CD14-positive monocyte (primary cell): ENCODE measurements at regions of chr2 and their contacts with region 1.

Region 1: DNA sequence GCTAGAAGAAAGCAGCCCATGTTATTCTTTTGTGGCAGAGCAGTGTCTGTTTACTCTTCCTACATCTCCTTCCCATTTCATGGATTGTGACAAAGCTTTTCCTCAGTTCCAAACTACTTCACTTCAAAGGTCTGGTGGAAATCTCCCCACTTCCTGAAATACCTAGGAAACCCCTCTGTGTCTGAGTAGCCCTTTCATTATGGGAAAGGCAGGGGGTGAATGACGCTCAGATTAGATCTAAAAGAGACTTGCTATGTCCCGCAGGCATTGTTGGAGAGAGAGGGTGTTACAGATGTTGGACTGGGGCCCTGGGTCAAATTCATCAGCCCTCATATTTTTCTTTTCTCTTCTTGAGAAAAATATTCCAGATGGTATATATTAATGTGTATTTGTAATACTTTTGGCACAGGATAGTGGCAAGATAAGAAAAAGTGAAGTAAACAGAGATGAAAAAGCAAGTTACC is 675.0 kb downstream of the IRS1 start:
- DNase-seq: no peak
- H3K4me3 ChIP-seq: no peak overlapping the region
- H3K4me3 Mint-ChIP-seq: no peak overlapping the region
- H3K27ac ChIP-seq: peak overlapping the region in 1 of 2 donors; percentile 44
- H3K27ac Mint-ChIP-seq: peak overlapping the region in 6 of 7 donors; percentile 61 to 84 (median 70)
- H3K4me1 ChIP-seq: peaks cover 50 to 71% of the 10 kb centered on the region in 2 donors
- H3K4me1 Mint-ChIP-seq: peaks cover 56% of the 10 kb centered on the region
- H3K27me3 ChIP-seq: no peaks in the 10 kb centered on the region
- H3K27me3 Mint-ChIP-seq: no peaks in the 10 kb centered on the region
- CTCF ChIP-seq: no peak

Region 2: DNA sequence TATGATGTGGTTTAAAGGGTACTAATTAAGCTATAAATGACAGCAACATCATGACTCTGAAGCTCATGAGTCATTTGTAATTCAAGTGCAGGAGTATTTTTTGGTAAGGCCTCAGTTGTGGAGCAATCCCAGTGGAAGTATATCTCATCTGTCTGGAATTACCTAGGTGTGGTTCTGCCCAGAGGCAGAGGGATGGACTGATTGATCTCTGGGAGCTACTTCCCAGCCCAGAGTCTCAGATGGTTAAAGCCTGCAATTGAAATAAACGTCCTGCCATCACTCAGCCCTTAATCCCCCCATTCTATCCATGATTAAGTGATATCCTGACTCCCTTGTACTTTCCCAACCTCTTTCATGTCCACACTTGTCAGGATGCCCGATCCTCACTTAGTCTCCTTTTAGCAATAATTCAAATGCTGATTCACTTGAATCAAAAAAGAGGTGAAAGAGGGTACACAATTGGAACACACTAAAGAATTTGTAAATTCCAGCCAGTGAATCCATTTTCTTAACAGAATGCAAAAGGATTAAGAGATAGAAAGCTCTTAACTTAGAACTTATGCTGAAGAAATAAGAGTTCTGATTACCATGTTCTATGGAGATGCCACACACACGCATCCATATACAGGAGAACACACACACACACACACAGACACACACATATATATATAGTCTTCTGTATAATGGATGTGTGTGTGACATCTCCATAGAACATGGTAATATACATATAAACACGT is 60.7 kb before region 1 on chr2:
- intact Hi-C with region 1: no loop called
- DNase-seq: no peak
- H3K4me3 ChIP-seq: no peak overlapping the region
- H3K4me3 Mint-ChIP-seq: no peak overlapping the region
- H3K27ac ChIP-seq: no peak overlapping the region
- H3K27ac Mint-ChIP-seq: no peak overlapping the region
- H3K4me1 ChIP-seq: peaks cover 14 to 22% of the 10 kb centered on the region in 2 donors
- H3K4me1 Mint-ChIP-seq: peaks cover 23% of the 10 kb centered on the region
- H3K27me3 ChIP-seq: no peaks in the 10 kb centered on the region
- H3K27me3 Mint-ChIP-seq: peaks cover 0 to 1% (median 0%) of the 10 kb centered on the region in 3 donors
- CTCF ChIP-seq: no peak

Region 3: GRCh38 chr2:226079671-226080181 is 44.9 kb before region 1 on chr2:
- intact Hi-C with region 1: no loop called
- DNase-seq: no peak
- H3K4me3 ChIP-seq: no peak overlapping the region
- H3K4me3 Mint-ChIP-seq: no peak overlapping the region
- H3K27ac ChIP-seq: no peak overlapping the region
- H3K27ac Mint-ChIP-seq: no peak overlapping the region
- H3K4me1 ChIP-seq: peaks cover 4 to 6% of the 10 kb centered on the region in 2 donors
- H3K4me1 Mint-ChIP-seq: peaks cover 8% of the 10 kb centered on the region
- H3K27me3 ChIP-seq: no peaks in the 10 kb centered on the region
- H3K27me3 Mint-ChIP-seq: no peaks in the 10 kb centered on the region
- CTCF ChIP-seq: no peak

Region 4: DNA sequence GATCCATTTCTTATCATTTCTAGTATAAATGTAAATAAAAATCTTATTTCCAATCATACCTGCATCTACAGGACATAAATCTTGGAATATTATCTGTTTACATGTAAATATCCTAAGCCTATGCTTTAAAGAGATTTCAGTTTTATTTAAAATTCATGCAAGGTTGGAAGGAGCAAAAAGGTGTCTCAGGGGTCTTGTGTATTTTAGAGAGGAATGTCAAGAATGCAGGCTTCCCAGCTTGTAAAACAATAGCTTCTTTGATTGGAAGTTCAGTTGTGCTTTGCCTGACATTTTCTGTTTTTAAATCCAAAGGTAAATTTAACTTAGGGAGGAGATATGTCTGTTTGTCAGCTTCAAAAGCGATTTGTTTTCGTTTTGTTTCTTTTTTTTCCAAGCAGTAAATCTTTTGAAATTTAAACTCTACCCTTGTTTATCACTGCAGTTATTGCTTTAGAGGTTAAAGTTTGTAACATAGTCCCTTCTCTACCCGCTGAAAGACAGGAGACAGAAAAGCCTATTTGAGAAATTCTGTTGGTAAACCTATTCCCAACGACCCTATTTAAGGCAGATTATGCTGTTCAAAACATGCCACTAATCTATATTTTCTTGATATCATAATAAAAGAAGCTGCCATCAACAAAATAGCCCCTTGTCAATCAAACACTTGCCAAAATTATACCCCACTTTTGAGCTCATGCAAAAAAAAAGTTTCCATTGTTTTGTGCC is 35.3 kb after region 1 on chr2:
- intact Hi-C with region 1: no loop called
- DNase-seq: no peak
- H3K4me3 ChIP-seq: no peak overlapping the region
- H3K4me3 Mint-ChIP-seq: no peak overlapping the region
- H3K27ac ChIP-seq: no peak overlapping the region
- H3K27ac Mint-ChIP-seq: no peak overlapping the region
- H3K4me1 ChIP-seq: peaks cover 0 to under 1% of the 10 kb centered on the region in 2 donors
- H3K4me1 Mint-ChIP-seq: no peaks in the 10 kb centered on the region
- H3K27me3 ChIP-seq: no peaks in the 10 kb centered on the region
- H3K27me3 Mint-ChIP-seq: peaks cover 0 to 2% (median 2%) of the 10 kb centered on the region in 3 donors
- CTCF ChIP-seq: no peak

Region 5: GRCh38 chr2:226423498-226423960 is 298.9 kb after region 1 on chr2:
- intact Hi-C with region 1: loop called in 1 of 2 experiments (anchors 5 kb)
- DNase-seq: peak; percentile 85 to 94 (median 93)
- H3K4me3 ChIP-seq: peak overlapping the region in 1 of 3 experiments; percentile 59
- H3K4me3 Mint-ChIP-seq: peak overlapping the region; percentile 7 to 79
- H3K27ac ChIP-seq: peak overlapping the region; percentile 77 to 91
- H3K27ac Mint-ChIP-seq: peak overlapping the region; percentile 88 to 95 (median 90)
- H3K4me1 ChIP-seq: peaks cover 56 to 72% of the 10 kb centered on the region in 2 donors
- H3K4me1 Mint-ChIP-seq: peaks cover 64% of the 10 kb centered on the region
- H3K27me3 ChIP-seq: no peaks in the 10 kb centered on the region
- H3K27me3 Mint-ChIP-seq: no peaks in the 10 kb centered on the region
- CTCF ChIP-seq: no peak